CD8-positive, alpha-beta memory T cell (primary cell): ENCODE measurements at regions of chr9 and their contacts with region 1.

Region 1: DNA sequence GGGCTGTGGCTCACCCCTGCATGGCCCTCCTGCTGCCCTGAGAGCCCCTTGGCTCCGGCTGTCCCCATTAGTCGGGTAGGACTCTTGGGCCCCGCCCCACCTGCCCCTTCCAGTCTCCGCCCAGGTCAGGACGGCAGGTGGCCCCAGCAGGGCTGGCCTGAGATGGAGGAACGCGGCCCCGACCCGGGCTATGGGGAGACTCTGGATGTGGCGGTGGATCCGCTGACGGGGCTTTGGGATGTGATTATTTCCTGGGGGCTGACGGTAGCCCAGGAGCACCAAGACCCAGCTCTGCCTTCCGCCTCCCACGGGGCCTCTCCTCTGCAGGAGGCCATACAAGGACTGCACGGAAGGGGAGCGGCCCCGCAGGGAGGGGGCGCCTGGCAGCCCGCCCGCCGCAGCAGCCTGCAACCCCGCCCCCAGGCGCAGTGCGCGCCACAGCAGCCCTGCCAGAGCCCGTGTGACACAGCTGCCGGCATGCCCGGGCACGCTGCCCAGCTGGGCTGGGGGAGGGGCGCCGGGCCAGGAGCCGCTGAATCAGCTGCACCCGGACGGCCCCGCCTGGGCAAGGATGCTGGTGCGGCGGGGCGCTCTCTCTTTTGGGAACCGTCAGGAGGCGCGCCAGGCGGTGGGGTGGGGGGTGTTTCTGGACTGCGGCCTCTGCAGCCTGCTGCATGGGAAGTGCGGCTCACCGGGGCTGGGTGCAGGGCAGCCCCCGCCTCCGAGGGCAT is 9.2 kb downstream of the TMEM250 start:
- DNase-seq: peak; percentile 87 to 95 (median 91)
- H3K4me3 ChIP-seq: peak overlapping the region; percentile 63
- H3K4me3 Mint-ChIP-seq: peak overlapping the region; percentile 82 to 96 (median 86)
- H3K27ac ChIP-seq: peak overlapping the region; percentile 61
- H3K27ac Mint-ChIP-seq: peak overlapping the region; percentile 80 to 98 (median 88)
- H3K4me1 ChIP-seq: peaks cover 88% of the 10 kb centered on the region
- H3K4me1 Mint-ChIP-seq: peaks cover 55 to 84% (median 57%) of the 10 kb centered on the region in 3 donors
- H3K27me3 ChIP-seq: no peaks in the 10 kb centered on the region
- H3K27me3 Mint-ChIP-seq: no peaks in the 10 kb centered on the region

Region 2: GRCh38 chr9:135908754-135909204 is 200.7 kb before region 1 on chr9:
- CTCF ChIA-PET with region 1: no interaction called
- POLR2A ChIA-PET with region 1: interaction called, 10 read pairs
- DNase-seq: no peak
- H3K4me3 ChIP-seq: peak overlapping the region; percentile 58
- H3K4me3 Mint-ChIP-seq: peak overlapping the region; percentile 77 to 90 (median 86)
- H3K27ac ChIP-seq: no peak overlapping the region
- H3K27ac Mint-ChIP-seq: peak overlapping the region in 7 of 8 donors; percentile 13 to 97 (median 86)
- H3K4me1 ChIP-seq: peaks cover 31% of the 10 kb centered on the region
- H3K4me1 Mint-ChIP-seq: peaks cover 42 to 58% (median 53%) of the 10 kb centered on the region in 3 donors
- H3K27me3 ChIP-seq: no peaks in the 10 kb centered on the region
- H3K27me3 Mint-ChIP-seq: peaks cover 0 to 2% of the 10 kb centered on the region in 2 donors

Region 3: GRCh38 chr9:136093995-136094881 is 15.3 kb before region 1 on chr9:
- CTCF ChIA-PET with region 1: interaction called, 9 read pairs
- POLR2A ChIA-PET with region 1: interaction called, 59 read pairs
- DNase-seq: peak; percentile 39 to 72 (median 57)
- H3K4me3 ChIP-seq: peak overlapping the region; percentile 50
- H3K4me3 Mint-ChIP-seq: peak overlapping the region; percentile 64 to 94 (median 77)
- H3K27ac ChIP-seq: peak overlapping the region; percentile 47
- H3K27ac Mint-ChIP-seq: peak overlapping the region in 6 of 8 donors; percentile 42 to 85 (median 57)
- H3K4me1 ChIP-seq: peaks cover 28% of the 10 kb centered on the region
- H3K4me1 Mint-ChIP-seq: peaks cover 20 to 49% (median 22%) of the 10 kb centered on the region in 3 donors
- H3K27me3 ChIP-seq: no peaks in the 10 kb centered on the region
- H3K27me3 Mint-ChIP-seq: peaks cover 0 to 2% of the 10 kb centered on the region in 2 donors

Region 4: DNA sequence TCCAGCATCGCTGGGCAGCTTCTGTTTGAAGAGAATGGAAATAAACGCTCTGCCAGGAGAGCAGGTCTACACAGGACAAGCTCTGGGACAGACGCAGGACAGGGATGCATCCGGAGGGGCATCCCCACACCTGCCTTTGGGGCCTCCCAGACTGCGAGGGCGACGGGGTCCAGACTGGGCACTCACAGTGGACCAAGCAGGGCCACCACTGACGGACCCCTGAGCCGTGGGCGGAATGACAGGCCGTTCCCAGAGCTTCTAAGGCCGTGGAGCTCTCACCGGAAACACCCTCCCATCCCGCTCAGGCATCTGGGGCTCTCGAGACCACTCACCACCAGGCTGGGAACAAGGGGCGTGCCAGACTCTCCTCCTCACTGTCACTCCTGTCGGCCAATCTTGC is 19.7 kb after region 1 on chr9:
- CTCF ChIA-PET with region 1: no interaction called
- POLR2A ChIA-PET with region 1: no interaction called
- DNase-seq: no peak
- H3K4me3 ChIP-seq: no peak overlapping the region
- H3K4me3 Mint-ChIP-seq: no peak overlapping the region
- H3K27ac ChIP-seq: no peak overlapping the region
- H3K27ac Mint-ChIP-seq: no peak overlapping the region
- H3K4me1 ChIP-seq: no peaks in the 10 kb centered on the region
- H3K4me1 Mint-ChIP-seq: peaks cover 0 to 11% (median 2%) of the 10 kb centered on the region in 3 donors
- H3K27me3 ChIP-seq: peaks cover 6% of the 10 kb centered on the region
- H3K27me3 Mint-ChIP-seq: peaks cover 11 to 44% of the 10 kb centered on the region in 2 donors